A673 (cell line): ENCODE measurements at regions of chrX and their contacts with region 1.

Region 1: DNA sequence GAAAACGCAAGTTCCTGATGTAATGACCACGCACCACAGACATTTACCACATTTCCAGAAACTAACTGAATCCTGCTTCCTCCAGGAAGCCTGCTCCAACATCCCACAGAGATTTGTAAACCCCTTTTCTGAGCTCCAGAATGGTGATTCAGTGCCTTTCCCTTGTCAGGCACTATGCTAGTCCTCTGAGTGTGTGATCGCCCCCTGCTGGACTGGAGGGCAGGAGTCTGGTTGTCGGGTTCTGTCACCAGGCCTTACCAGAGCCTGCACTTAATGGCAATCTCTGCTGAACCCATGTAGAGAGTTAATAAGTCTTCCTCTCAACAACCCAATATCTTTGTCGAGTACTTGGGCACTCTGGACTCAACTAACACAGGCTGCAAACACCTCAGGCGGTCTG is 14.5 kb upstream of the KDM5C start:
- DNase-seq: peak; percentile 57
- H3K4me3 ChIP-seq: no peak overlapping the region
- H3K27ac ChIP-seq: no peak overlapping the region
- H3K4me1 ChIP-seq: no peaks in the 10 kb centered on the region
- H3K27me3 ChIP-seq: no peaks in the 10 kb centered on the region
- CTCF ChIP-seq: peak; percentile 52

Region 2: DNA sequence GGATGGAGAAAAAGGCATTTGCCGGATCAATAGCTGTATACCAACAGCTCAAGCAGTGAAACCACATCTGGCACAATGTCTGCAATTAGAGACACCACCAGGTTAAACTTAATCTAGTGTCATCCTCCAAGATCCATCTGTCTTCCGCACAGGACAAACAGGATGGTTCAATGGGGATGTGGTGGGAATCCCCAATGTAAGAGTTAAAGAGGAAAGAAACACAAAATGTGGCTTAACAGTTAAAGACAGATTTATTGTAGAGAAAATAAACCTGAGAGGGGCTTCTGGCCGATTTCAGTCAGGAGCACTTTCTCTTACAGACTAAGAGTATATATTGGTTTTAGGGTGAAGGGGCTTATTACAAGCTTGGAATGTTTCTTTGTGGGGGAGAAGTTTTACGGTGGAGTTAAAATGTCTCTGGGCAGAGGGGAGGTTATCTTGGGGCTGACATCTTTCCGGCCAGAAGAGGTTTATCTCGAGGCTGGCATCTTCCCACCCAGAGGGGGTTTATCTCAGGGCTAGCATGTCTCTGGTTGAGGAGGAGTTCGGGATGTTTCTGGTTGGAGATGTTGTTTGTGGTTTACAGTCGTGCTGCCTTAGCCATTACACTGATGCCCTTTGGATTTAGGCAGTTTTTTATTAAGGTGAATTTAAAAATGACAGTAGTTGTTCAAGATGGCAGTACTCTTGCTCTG is 83.8 kb before region 1 on chrX:
- CTCF ChIA-PET with region 1: no interaction called
- POLR2A ChIA-PET with region 1: no interaction called
- intact Hi-C with region 1: no loop called
- DNase-seq: no peak
- H3K4me3 ChIP-seq: no peak overlapping the region
- H3K27ac ChIP-seq: no peak overlapping the region
- H3K4me1 ChIP-seq: no peaks in the 10 kb centered on the region
- H3K27me3 ChIP-seq: no peaks in the 10 kb centered on the region
- CTCF ChIP-seq: no peak

Region 3: DNA sequence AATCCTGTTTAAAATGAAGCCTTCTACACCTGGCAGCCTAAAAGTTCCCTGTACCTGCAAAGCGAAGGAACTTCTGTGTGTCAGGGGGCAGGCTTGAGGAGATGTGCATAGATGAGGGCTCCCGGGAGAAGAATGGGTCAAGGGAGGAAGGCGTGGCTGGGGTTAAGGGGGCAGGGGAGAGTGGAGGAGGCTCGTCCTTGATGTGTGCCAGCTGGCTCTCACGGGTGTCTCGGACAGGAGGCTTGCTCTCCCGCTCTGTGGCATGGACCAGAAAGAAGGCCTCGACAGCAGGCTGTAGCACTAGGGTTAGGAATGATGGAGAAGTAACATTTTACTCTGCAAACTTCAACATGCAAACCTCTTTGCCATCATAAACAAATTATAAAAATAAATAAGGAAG is 299.3 kb after region 1 on chrX:
- CTCF ChIA-PET with region 1: interaction called, 13 read pairs
- POLR2A ChIA-PET with region 1: no interaction called
- intact Hi-C with region 1: no loop called
- DNase-seq: no peak
- H3K4me3 ChIP-seq: no peak overlapping the region
- H3K27ac ChIP-seq: no peak overlapping the region
- H3K4me1 ChIP-seq: no peaks in the 10 kb centered on the region
- H3K27me3 ChIP-seq: no peaks in the 10 kb centered on the region
- CTCF ChIP-seq: no peak

Region 4: GRCh38 chrX:54509400-54509799 is 1269.9 kb after region 1 on chrX:
- CTCF ChIA-PET with region 1: interaction called, 10 read pairs
- POLR2A ChIA-PET with region 1: no interaction called
- intact Hi-C with region 1: no loop called
- DNase-seq: peak; percentile 67
- H3K4me3 ChIP-seq: no peak overlapping the region
- H3K27ac ChIP-seq: no peak overlapping the region
- H3K4me1 ChIP-seq: no peaks in the 10 kb centered on the region
- H3K27me3 ChIP-seq: no peaks in the 10 kb centered on the region
- CTCF ChIP-seq: no peak